IMR-90 (cell line): ENCODE measurements at regions of chr4 and their contacts with region 1.

Region 1: GRCh38 chr4:74522251-74522991 is 77.5 kb downstream of the AREG start:
- DNase-seq: peak; percentile 63
- ATAC-seq: peak; percentile 84
- H3K4me3 ChIP-seq: no peak overlapping the region
- H3K27ac ChIP-seq: no peak overlapping the region
- H3K4me1 ChIP-seq: peaks cover 3% of the 10 kb centered on the region; the same call in 1 of the 2 replicates
- H3K27me3 ChIP-seq: no peaks in the 10 kb centered on the region
- CTCF ChIP-seq: no peak
- POLR2A ChIP-seq: no peak
- RAD21 ChIP-seq: no peak

Region 2: GRCh38 chr4:74370912-74371311 is 151.5 kb before region 1 on chr4:
- CTCF ChIA-PET with region 1: interaction called, 10 read pairs
- POLR2A ChIA-PET with region 1: no interaction called
- dilution Hi-C with region 1: no loop called
- in situ Hi-C with region 1: no loop called
- intact Hi-C with region 1: no loop called
- DNase-seq: peak; percentile 64
- ATAC-seq: peak; percentile 99
- H3K4me3 ChIP-seq: no peak overlapping the region
- H3K27ac ChIP-seq: no peak overlapping the region
- H3K4me1 ChIP-seq: no peaks in the 10 kb centered on the region
- H3K27me3 ChIP-seq: no peaks in the 10 kb centered on the region
- CTCF ChIP-seq: peak; percentile 78
- POLR2A ChIP-seq: no peak
- RAD21 ChIP-seq: peak; percentile 83